ENCODE measurements at regions of chr3 and their contacts with region 1.

Region 1: GRCh38 chr3:25648107-25648535 is 16.6 kb downstream of the TOP2B start:
- DNase-seq: peak; percentile 89
- H3K4me3 Mint-ChIP-seq: no peak overlapping the region
- H3K27ac Mint-ChIP-seq: no peak overlapping the region
- H3K4me1 Mint-ChIP-seq: peaks cover 27% of the 10 kb centered on the region
- H3K27me3 Mint-ChIP-seq: no peaks in the 10 kb centered on the region

Region 2: DNA sequence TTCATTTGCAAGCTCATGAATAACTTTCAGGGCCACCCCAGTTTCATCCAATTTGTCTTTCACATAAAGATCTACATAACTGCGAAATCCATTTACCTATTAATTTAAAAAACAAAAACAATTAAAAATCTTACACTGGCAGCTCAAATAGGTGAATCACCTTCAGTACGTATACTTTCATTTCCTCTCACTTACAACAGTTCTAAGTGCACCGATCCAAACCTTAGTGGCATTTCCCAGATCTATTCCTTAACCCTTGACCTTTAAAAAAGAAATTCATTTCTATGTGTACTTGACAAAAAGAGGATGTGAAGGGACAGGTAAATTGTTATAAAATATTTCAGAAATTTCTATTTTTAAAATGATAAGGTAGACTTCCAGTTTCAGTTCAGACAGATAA is 14.2 kb before region 1 on chr3:
- CTCF ChIA-PET with region 1: interaction called, 11 read pairs
- POLR2A ChIA-PET with region 1: no interaction called
- DNase-seq: no peak
- H3K4me3 Mint-ChIP-seq: no peak overlapping the region
- H3K27ac Mint-ChIP-seq: no peak overlapping the region
- H3K4me1 Mint-ChIP-seq: peaks cover 12% of the 10 kb centered on the region
- H3K27me3 Mint-ChIP-seq: no peaks in the 10 kb centered on the region

Region 3: DNA sequence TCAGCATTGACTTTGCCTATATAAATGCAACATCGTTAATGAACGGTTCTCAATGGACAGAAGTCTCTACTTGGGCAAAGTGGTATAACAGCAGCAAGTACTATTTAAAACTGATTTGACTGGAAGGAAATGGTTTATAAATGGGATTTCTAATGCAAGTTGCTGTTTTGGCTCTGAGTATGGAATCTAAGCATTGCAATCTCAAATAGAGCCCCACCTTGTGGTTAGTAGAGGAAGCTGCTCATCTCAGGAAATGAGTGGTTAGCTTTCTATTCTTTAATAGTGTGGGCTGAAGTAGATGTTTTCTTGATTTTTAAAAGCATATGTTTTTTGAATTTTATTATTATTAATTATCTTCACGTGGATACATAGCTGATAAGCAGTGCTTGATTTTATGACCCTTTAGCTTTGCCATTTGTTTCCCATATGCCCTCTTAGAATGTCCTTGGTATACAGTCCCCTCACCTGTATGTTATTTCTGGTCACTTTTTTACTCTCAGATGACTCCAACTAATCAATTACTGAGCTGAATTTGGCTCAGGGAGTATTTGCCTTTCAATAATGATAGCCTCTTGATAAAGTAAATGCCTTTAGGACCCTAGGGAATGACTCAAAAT is 208.9 kb after region 1 on chr3:
- CTCF ChIA-PET with region 1: interaction called, 17 read pairs
- POLR2A ChIA-PET with region 1: no interaction called
- DNase-seq: peak; percentile 31
- H3K4me3 Mint-ChIP-seq: no peak overlapping the region
- H3K27ac Mint-ChIP-seq: no peak overlapping the region
- H3K4me1 Mint-ChIP-seq: peaks cover 5% of the 10 kb centered on the region
- H3K27me3 Mint-ChIP-seq: no peaks in the 10 kb centered on the region

Region 4: DNA sequence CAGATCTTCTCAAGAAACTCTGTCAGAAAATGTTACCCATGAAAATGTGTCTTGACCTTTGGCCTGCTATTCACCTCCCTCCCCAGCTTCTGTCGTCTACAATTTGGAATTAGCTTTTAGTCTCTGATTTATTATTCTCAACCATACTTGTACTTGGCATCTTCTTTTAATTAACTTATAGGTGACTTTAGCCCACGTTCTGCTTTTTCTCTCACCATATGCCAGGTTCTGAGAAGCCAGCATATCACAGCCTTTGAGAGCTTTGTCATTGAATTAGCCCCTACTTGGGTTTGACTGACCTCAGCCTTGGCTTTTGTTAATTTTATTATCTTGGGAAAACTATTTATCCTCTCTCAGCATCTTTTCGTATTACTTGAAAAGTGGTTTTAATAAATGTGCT is 497.6 kb after region 1 on chr3:
- CTCF ChIA-PET with region 1: no interaction called
- POLR2A ChIA-PET with region 1: no interaction called
- DNase-seq: no peak
- H3K4me3 Mint-ChIP-seq: no peak overlapping the region
- H3K27ac Mint-ChIP-seq: no peak overlapping the region
- H3K4me1 Mint-ChIP-seq: no peaks in the 10 kb centered on the region
- H3K27me3 Mint-ChIP-seq: no peaks in the 10 kb centered on the region

Measured in activated CD4-positive, alpha-beta T cell treated with anti-CD3 and anti-CD28 coated beads, Interleukin-2, amount 10 ng/mL, durations not matched to agents 7 days and 5 days (primary cell).